Natural killer cell (primary cell): ENCODE measurements at regions of chr9 and their contacts with region 1.

Region 1: GRCh38 chr9:121213136-121213806 is 11.6 kb upstream of the RAB14 start:
- DNase-seq: peak; percentile 56 to 79
- ATAC-seq: peak; percentile 73 to 85 (median 81)
- H3K4me3 ChIP-seq: no peak overlapping the region
- H3K4me3 Mint-ChIP-seq: no peak overlapping the region
- H3K27ac ChIP-seq: no peak overlapping the region
- H3K27ac Mint-ChIP-seq: no peak overlapping the region
- H3K4me1 ChIP-seq: peaks cover 8% of the 10 kb centered on the region
- H3K4me1 Mint-ChIP-seq: peaks cover 3 to 8% of the 10 kb centered on the region in 2 donors
- H3K27me3 ChIP-seq: no peaks in the 10 kb centered on the region
- H3K27me3 Mint-ChIP-seq: no peaks in the 10 kb centered on the region
- CTCF ChIP-seq: peak; percentile 83

Region 2: GRCh38 chr9:121059998-121060636 is 153.2 kb before region 1 on chr9:
- intact Hi-C with region 1: no loop called
- DNase-seq: peak in 1 of 2 donors; percentile 77
- ATAC-seq: peak in 2 of 3 donors; percentile 44 to 57
- H3K4me3 ChIP-seq: no peak overlapping the region
- H3K4me3 Mint-ChIP-seq: no peak overlapping the region
- H3K27ac ChIP-seq: no peak overlapping the region
- H3K27ac Mint-ChIP-seq: no peak overlapping the region
- H3K4me1 ChIP-seq: no peaks in the 10 kb centered on the region
- H3K4me1 Mint-ChIP-seq: no peaks in the 10 kb centered on the region
- H3K27me3 ChIP-seq: no peaks in the 10 kb centered on the region
- H3K27me3 Mint-ChIP-seq: peaks cover 0 to 3% of the 10 kb centered on the region in 2 donors
- CTCF ChIP-seq: peak; percentile 76

Region 3: DNA sequence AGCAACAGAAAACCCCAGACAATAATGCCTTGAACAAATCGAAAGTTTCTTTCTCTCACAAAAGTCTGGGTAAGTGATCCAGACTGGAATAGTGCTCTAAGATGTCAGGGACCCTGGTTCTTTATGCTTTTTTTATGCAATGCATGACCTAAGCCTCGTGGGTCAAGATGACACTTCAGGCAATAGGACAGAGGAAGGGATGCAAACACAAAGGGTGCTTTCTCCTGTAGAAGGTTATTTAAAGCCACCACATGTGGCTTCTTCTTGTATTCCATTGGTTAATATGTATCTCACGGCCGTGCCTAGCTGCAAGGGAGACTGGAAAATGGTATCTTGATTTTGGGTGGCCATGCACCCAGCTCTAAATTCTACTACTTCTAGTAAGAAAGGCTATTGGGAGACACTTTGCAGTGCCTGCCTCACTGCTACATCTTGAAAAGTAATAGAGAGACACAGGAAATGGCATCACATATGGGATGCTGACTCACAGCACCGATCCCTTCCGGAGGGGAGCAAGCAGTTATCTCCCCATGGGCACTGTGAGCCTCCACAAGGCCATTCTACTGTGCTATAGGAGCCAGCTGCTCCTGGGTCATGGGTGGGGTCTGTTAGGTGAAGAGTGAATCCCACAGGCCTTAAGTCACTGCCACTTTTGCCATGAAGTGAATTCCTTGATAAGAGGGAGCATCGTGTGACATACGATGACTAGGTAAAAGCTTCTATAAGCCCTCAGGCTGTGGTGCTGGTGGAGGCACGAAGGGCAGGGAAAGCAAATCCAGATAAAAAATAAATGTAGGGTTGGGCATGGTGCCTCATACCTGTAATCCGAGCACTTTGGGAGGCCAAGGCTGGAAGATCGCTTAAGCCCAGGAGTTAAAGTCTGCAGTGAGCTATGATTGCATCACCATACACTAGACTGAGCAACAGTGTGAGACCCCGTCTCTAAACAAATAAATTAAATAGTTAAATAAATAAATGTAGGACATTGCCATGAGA is 20.9 kb after region 1 on chr9:
- intact Hi-C with region 1: no loop called
- DNase-seq: no peak
- ATAC-seq: no peak
- H3K4me3 ChIP-seq: no peak overlapping the region
- H3K4me3 Mint-ChIP-seq: no peak overlapping the region
- H3K27ac ChIP-seq: no peak overlapping the region
- H3K27ac Mint-ChIP-seq: no peak overlapping the region
- H3K4me1 ChIP-seq: no peaks in the 10 kb centered on the region
- H3K4me1 Mint-ChIP-seq: no peaks in the 10 kb centered on the region
- H3K27me3 ChIP-seq: no peaks in the 10 kb centered on the region
- H3K27me3 Mint-ChIP-seq: no peaks in the 10 kb centered on the region
- CTCF ChIP-seq: no peak

Region 4: GRCh38 chr9:121271720-121272341 is 58.6 kb after region 1 on chr9:
- intact Hi-C with region 1: loop called (anchors 5 kb)
- DNase-seq: no peak
- ATAC-seq: peak; percentile 41 to 55 (median 44)
- H3K4me3 ChIP-seq: no peak overlapping the region
- H3K4me3 Mint-ChIP-seq: peak overlapping the region; percentile 94
- H3K27ac ChIP-seq: peak overlapping the region; percentile 43
- H3K27ac Mint-ChIP-seq: peak overlapping the region; percentile 83 to 93
- H3K4me1 ChIP-seq: peaks cover 59% of the 10 kb centered on the region
- H3K4me1 Mint-ChIP-seq: peaks cover 58 to 68% of the 10 kb centered on the region in 2 donors
- H3K27me3 ChIP-seq: no peaks in the 10 kb centered on the region
- H3K27me3 Mint-ChIP-seq: no peaks in the 10 kb centered on the region
- CTCF ChIP-seq: no peak

Region 5: GRCh38 chr9:121399883-121400607 is 186.8 kb after region 1 on chr9:
- intact Hi-C with region 1: loop called (anchors 1 kb)
- DNase-seq: peak in 1 of 2 donors; percentile 83
- ATAC-seq: peak; percentile 54 to 65 (median 64)
- H3K4me3 ChIP-seq: no peak overlapping the region
- H3K4me3 Mint-ChIP-seq: no peak overlapping the region
- H3K27ac ChIP-seq: no peak overlapping the region
- H3K27ac Mint-ChIP-seq: no peak overlapping the region
- H3K4me1 ChIP-seq: no peaks in the 10 kb centered on the region
- H3K4me1 Mint-ChIP-seq: no peaks in the 10 kb centered on the region
- H3K27me3 ChIP-seq: no peaks in the 10 kb centered on the region
- H3K27me3 Mint-ChIP-seq: no peaks in the 10 kb centered on the region
- CTCF ChIP-seq: peak; percentile 86